SK-N-SH (cell line): ENCODE measurements at regions of chr4 and their contacts with region 1.

Region 1: GRCh38 chr4:154642373-154643009 is 30.0 kb upstream of the FGG start:
- DNase-seq: no peak
- H3K4me3 ChIP-seq: no peak overlapping the region
- H3K27ac ChIP-seq: no peak overlapping the region
- H3K4me1 ChIP-seq: no peaks in the 10 kb centered on the region
- H3K27me3 ChIP-seq: no peaks in the 10 kb centered on the region; the same call in 1 of the 2 replicates
- CTCF ChIP-seq: no peak
- EP300 ChIP-seq: no peak
- RAD21 ChIP-seq: no peak

Region 2: GRCh38 chr4:154618708-154619315 is 23.7 kb before region 1 on chr4:
- CTCF ChIA-PET with region 1: interaction called, 21 read pairs
- POLR2A ChIA-PET with region 1: no interaction called
- DNase-seq: peak; percentile 39
- H3K4me3 ChIP-seq: peak overlapping the region in 1 of 2 experiments; percentile 30; a peak in 1 of 4 replicates
- H3K27ac ChIP-seq: no peak overlapping the region
- H3K4me1 ChIP-seq: no peaks in the 10 kb centered on the region
- H3K27me3 ChIP-seq: no peaks in the 10 kb centered on the region; the same call in 1 of the 2 replicates
- CTCF ChIP-seq: peak; percentile 74
- EP300 ChIP-seq: no peak
- RAD21 ChIP-seq: peak; percentile 60

Region 3: GRCh38 chr4:154626793-154627484 is 15.6 kb before region 1 on chr4:
- CTCF ChIA-PET with region 1: interaction called, 12 read pairs
- POLR2A ChIA-PET with region 1: no interaction called
- DNase-seq: peak; percentile 79
- H3K4me3 ChIP-seq: peak overlapping the region; percentile 3 to 43; a peak in 2 of 4 replicates
- H3K27ac ChIP-seq: no peak overlapping the region
- H3K4me1 ChIP-seq: no peaks in the 10 kb centered on the region; a peak in 1 of 4 replicates
- H3K27me3 ChIP-seq: peaks cover 19% of the 10 kb centered on the region; the same call in 1 of the 2 replicates
- CTCF ChIP-seq: peak; percentile 47
- EP300 ChIP-seq: no peak
- RAD21 ChIP-seq: no peak

Region 4: DNA sequence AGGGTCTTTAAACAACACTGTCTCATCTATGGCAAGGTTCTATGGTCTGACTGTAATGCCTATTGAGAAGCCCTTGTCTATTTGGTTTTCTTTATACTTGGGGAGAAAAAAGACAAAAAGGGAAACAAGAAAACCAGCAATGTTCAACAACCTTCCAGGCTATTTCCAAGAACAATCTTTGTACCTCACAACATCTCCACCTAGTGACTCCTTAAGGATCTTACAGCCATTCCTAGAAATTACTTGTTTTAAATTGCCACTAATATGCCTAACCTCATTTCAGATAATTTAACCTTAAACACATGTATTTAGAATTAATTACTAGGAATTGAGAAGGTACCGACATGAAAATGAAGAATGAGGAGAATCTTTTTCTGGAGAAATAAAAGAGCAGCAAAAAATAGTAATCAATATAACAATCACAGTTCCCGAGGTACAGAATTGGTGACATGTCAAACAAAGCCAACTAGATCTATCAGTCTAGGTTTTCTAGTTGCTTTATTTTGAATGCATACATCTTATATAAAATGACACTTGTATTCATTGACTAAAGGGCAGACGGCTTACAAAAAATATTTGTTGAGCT is 137.0 kb after region 1 on chr4:
- CTCF ChIA-PET with region 1: interaction called, 10 read pairs
- POLR2A ChIA-PET with region 1: no interaction called
- DNase-seq: peak; percentile 33
- H3K4me3 ChIP-seq: no peak overlapping the region
- H3K27ac ChIP-seq: no peak overlapping the region
- H3K4me1 ChIP-seq: no peaks in the 10 kb centered on the region
- H3K27me3 ChIP-seq: no peaks in the 10 kb centered on the region
- CTCF ChIP-seq: peak; percentile 64
- EP300 ChIP-seq: no peak
- RAD21 ChIP-seq: peak; percentile 56

Region 5: DNA sequence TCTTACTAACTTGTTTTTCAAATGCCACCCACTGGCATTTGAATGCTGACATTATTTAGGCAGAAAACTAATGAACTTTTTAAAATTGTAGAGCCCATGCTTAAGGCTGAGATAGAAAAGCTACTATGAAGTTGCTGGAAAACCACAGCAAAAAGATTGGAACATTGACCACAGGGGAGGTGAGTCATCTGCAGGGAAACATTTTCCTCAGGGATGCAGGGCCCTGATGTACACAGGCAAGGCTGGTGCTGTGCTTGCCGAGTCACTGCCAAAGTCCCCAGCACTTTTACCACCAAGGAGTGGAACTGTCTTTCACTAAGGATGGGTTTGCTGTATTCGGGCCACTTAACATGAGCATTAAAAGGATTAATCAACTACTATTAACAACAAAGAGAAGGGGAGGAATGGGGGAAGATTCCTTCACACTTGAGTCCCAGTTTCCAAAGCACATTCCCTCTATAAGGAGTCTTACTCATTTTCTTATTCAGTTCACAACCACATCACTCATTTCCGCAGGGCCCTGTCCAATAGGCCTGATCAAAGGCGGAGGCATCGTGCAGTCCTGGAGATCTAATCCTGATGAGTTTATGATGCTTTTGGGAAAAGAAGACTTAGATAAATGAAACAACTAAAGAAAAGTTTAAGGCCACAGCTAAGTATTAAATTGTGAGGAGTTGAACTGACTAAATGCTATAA is 363.1 kb after region 1 on chr4:
- CTCF ChIA-PET with region 1: no interaction called
- POLR2A ChIA-PET with region 1: no interaction called
- DNase-seq: no peak
- H3K4me3 ChIP-seq: no peak overlapping the region
- H3K27ac ChIP-seq: peak overlapping the region in 1 of 2 experiments; percentile 57; a peak in 2 of 4 replicates
- H3K4me1 ChIP-seq: peaks cover 0 to 7% of the 10 kb centered on the region in 2 experiments; a peak in 1 of 4 replicates
- H3K27me3 ChIP-seq: no peaks in the 10 kb centered on the region
- CTCF ChIP-seq: no peak
- EP300 ChIP-seq: no peak
- RAD21 ChIP-seq: no peak